MCF 10A (cell line): ENCODE measurements at regions of chr4 and their contacts with region 1.

Region 1: DNA sequence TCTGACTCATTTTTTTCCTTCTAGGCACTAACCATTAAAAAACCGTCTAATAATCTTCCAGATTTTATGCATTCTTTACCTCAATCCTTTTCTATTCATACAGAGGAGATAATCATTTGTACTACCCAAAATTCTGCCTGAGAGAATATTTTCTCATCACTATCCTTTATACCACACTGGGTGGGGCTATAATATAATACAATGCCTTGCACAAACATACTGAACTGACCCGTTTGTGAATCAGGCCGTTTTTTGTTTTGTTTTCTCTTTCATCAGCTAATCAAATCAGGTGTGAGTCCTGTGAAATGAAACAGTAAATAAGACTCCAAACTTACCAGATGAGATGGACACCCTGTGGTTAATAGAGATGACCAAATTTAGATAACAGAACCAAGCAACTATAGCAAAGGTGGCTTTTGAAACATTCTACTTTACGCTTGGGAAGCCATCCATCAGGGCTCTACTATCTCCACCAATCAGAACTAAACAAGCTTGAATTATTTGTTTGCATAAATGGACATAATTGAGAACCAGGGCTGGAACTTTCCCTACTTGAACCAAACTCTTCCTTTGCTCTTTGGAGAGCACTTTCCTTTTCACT is 573.0 kb downstream of the GABRG1 start:
- DNase-seq: peak; percentile 32
- H3K4me3 Mint-ChIP-seq: no peak overlapping the region
- H3K27ac Mint-ChIP-seq: peak overlapping the region; percentile 20
- H3K4me1 Mint-ChIP-seq: peaks cover 4% of the 10 kb centered on the region
- H3K27me3 Mint-ChIP-seq: no peaks in the 10 kb centered on the region
- CTCF ChIP-seq: peak; percentile 32

Region 2: DNA sequence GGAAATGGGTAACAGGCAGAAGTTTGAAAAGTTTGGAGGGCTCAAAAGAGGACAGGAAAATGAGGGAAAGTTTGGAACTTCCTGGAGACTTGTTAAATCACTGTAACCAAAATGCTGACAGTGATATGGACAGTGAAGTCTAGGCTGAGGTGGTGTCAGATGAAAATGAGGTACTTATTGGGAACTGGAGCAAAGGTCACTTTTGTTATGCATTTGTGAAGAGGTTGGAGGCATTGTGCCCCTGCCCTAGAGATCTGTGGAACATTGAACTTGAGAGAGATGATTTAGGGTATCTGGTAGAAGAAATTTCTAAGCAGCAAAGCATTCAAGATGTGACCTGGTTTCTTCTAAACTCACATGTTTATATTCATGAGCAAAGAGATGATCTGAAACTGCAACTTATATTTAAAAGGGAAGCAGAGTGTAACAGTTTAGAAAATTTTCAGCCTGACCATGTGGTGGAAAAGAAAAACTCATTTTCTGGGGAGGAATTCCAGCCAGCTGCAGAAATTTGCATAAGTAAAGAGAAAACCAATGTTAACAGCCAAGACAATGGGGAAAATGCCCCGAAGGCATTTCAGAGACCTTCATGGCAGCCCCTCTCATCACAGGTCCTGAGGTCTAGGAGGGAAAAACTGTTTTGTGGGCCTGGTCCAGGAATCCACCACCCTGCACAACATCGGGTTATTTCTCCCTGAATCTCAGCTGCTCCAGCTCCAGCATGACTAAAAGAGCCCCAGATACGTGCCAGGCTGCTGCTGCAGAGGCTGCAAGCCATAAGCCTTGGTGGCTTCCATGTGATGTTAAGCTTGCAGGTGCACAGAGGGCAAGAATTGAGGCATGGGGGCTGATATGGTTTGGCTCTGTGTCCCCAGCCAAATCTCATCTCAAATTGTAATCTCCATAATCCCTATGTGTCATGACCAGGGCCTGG is 192.0 kb before region 1 on chr4:
- CTCF ChIA-PET with region 1: no interaction called
- POLR2A ChIA-PET with region 1: no interaction called
- intact Hi-C with region 1: no loop called
- DNase-seq: no peak
- H3K4me3 Mint-ChIP-seq: no peak overlapping the region
- H3K27ac Mint-ChIP-seq: no peak overlapping the region
- H3K4me1 Mint-ChIP-seq: no peaks in the 10 kb centered on the region
- H3K27me3 Mint-ChIP-seq: no peaks in the 10 kb centered on the region
- CTCF ChIP-seq: no peak

Region 3: GRCh38 chr4:45566896-45567603 is 16.2 kb after region 1 on chr4:
- CTCF ChIA-PET with region 1: interaction called, 11 read pairs
- POLR2A ChIA-PET with region 1: interaction called, 4 read pairs
- intact Hi-C with region 1: no loop called
- DNase-seq: no peak
- H3K4me3 Mint-ChIP-seq: no peak overlapping the region
- H3K27ac Mint-ChIP-seq: no peak overlapping the region
- H3K4me1 Mint-ChIP-seq: no peaks in the 10 kb centered on the region
- H3K27me3 Mint-ChIP-seq: no peaks in the 10 kb centered on the region
- CTCF ChIP-seq: no peak

Region 4: DNA sequence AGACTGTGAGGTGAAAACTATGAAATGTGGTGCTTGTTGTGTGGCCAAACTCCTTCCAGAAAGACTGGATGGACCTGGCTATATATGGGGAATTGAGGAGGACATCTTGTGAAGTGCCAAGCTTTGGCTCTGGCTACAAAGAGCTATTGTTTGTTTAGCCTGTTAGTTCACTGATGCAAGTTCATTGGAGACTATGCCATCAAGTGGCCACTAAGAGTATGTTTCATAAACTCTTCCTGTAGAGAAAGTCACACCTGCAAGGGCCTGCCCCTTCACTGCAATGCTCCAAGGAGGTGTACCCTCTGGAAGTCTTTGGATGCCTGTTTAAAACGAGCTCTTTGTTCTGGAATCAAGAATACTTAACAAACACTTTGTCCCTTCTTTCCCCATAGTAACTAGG is 191.0 kb after region 1 on chr4:
- CTCF ChIA-PET with region 1: interaction called, 4 read pairs
- POLR2A ChIA-PET with region 1: no interaction called
- intact Hi-C with region 1: loop called (anchors 10 kb)
- DNase-seq: peak; percentile 16
- H3K4me3 Mint-ChIP-seq: no peak overlapping the region
- H3K27ac Mint-ChIP-seq: no peak overlapping the region
- H3K4me1 Mint-ChIP-seq: no peaks in the 10 kb centered on the region
- H3K27me3 Mint-ChIP-seq: no peaks in the 10 kb centered on the region
- CTCF ChIP-seq: no peak

Region 5: DNA sequence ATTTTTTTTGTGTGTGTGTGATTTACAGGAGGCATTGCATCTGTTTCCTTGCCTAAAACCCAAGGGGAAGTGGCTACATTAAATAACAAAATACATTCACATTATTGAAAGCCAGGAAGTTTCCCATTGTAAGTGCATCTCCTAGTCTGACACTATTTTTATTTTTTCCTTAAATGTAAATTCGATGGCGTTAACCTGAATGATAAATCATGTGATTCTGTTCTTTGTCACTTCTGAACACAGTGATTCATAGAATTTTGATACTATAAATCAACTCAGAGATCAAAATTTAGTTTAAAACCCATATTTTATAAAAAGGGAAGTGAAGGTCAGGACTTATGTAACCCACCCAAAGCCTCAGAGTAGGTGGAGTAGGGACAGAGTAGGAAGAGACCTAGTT is 314.9 kb after region 1 on chr4:
- CTCF ChIA-PET with region 1: no interaction called
- POLR2A ChIA-PET with region 1: no interaction called
- intact Hi-C with region 1: no loop called
- DNase-seq: no peak
- H3K4me3 Mint-ChIP-seq: no peak overlapping the region
- H3K27ac Mint-ChIP-seq: no peak overlapping the region
- H3K4me1 Mint-ChIP-seq: no peaks in the 10 kb centered on the region
- H3K27me3 Mint-ChIP-seq: no peaks in the 10 kb centered on the region
- CTCF ChIP-seq: no peak

Region 6: GRCh38 chr4:46554760-46555465 is 1004.0 kb after region 1 on chr4:
- CTCF ChIA-PET with region 1: interaction called, 3 read pairs
- POLR2A ChIA-PET with region 1: interaction called, 3 read pairs
- intact Hi-C with region 1: loop called (anchors 5 kb)
- DNase-seq: no peak
- H3K4me3 Mint-ChIP-seq: no peak overlapping the region
- H3K27ac Mint-ChIP-seq: no peak overlapping the region
- H3K4me1 Mint-ChIP-seq: no peaks in the 10 kb centered on the region
- H3K27me3 Mint-ChIP-seq: no peaks in the 10 kb centered on the region
- CTCF ChIP-seq: no peak